ENCODE measurements at regions of chr7 and their contacts with region 1.

Region 1: DNA sequence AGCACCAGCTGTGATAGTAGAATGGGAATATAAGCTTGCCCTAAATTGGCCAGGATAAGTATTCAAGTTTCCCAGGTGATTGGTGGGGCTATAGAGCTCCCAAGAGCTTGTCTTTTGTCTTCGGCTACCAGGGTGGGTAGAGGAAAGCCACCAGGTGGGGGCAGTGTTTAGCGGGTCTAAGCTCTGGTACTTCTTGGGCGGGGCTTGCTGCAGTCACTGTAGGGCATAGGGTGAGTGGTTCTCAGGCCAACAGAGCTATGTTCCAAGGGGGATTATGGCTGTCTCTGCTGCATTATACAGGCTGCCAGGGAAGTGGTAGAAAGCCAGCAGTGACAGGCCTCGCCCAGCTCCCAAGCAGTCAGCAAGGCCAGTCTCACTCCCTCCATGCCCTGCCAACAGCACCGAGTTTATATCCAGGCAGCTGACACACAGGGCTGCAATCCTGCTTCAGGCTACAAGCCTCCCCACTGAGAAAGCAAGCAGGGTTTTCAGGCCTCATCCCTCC is 110.7 kb downstream of the ZNF467 start:
- DNase-seq: peak; percentile 50 to 63 (median 54)
- H3K4me3 ChIP-seq: no peak overlapping the region
- H3K4me3 Mint-ChIP-seq: no peak overlapping the region
- H3K27ac ChIP-seq: no peak overlapping the region
- H3K27ac Mint-ChIP-seq: peak overlapping the region in 1 of 7 donors; percentile 30
- H3K4me1 ChIP-seq: no peaks in the 10 kb centered on the region
- H3K4me1 Mint-ChIP-seq: no peaks in the 10 kb centered on the region
- H3K27me3 ChIP-seq: no peaks in the 10 kb centered on the region
- H3K27me3 Mint-ChIP-seq: peaks cover 5 to 36% (median 26%) of the 10 kb centered on the region in 3 donors
- CTCF ChIP-seq: peak; percentile 75

Region 2: GRCh38 chr7:149642589-149642988 is 20.1 kb before region 1 on chr7:
- intact Hi-C with region 1: no loop called
- DNase-seq: no peak
- H3K4me3 ChIP-seq: no peak overlapping the region
- H3K4me3 Mint-ChIP-seq: no peak overlapping the region
- H3K27ac ChIP-seq: no peak overlapping the region
- H3K27ac Mint-ChIP-seq: peak overlapping the region in 1 of 7 donors; percentile 35
- H3K4me1 ChIP-seq: no peaks in the 10 kb centered on the region
- H3K4me1 Mint-ChIP-seq: no peaks in the 10 kb centered on the region
- H3K27me3 ChIP-seq: no peaks in the 10 kb centered on the region
- H3K27me3 Mint-ChIP-seq: peaks cover 4 to 14% (median 6%) of the 10 kb centered on the region in 3 donors
- CTCF ChIP-seq: no peak

Region 3: DNA sequence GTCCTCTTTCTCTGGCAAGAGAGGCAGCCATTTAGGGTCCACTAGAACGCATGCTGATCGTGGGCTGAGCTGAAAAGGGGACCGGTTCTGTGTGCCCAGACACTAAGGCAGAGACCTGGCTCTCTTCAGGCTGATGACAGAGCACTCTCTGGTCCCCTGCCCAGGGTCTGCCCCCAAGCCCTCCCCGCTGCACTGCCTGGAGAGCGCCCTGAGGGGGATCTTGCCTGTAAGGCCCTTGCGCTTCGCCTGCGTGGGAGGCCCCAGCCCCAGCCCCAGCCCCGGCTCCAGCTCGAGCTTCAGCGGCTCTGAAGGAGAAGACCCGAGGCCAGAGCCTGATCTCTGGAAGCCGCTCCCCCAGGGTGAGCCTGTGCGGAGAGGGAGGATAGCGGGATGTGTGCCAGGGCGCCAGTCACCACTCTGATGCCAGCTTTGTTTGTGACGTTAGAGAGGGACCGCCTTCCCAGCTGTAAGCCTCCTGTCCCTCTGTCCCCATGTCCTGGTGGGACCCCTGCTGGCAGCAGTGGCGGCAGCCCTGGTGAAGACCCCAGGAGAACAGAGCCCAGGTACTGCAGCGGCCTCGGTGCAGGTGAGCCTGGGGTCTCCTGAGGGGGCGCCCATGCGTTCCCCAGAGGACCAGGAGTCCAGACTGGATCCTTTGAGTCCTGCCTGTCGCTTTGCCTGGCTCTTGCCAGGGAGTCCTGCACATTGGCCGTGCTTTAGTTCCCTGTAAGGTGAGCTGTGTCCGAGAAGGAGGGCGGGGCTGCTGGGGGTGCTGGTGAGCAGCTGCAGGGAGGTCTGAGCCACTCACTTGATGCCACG is 67.5 kb after region 1 on chr7:
- intact Hi-C with region 1: no loop called
- DNase-seq: no peak
- H3K4me3 ChIP-seq: no peak overlapping the region
- H3K4me3 Mint-ChIP-seq: no peak overlapping the region
- H3K27ac ChIP-seq: no peak overlapping the region
- H3K27ac Mint-ChIP-seq: no peak overlapping the region
- H3K4me1 ChIP-seq: peaks cover 8% of the 10 kb centered on the region in 2 donors
- H3K4me1 Mint-ChIP-seq: peaks cover 14% of the 10 kb centered on the region
- H3K27me3 ChIP-seq: no peaks in the 10 kb centered on the region
- H3K27me3 Mint-ChIP-seq: peaks cover 0 to 4% (median 0%) of the 10 kb centered on the region in 3 donors
- CTCF ChIP-seq: no peak

Region 4: DNA sequence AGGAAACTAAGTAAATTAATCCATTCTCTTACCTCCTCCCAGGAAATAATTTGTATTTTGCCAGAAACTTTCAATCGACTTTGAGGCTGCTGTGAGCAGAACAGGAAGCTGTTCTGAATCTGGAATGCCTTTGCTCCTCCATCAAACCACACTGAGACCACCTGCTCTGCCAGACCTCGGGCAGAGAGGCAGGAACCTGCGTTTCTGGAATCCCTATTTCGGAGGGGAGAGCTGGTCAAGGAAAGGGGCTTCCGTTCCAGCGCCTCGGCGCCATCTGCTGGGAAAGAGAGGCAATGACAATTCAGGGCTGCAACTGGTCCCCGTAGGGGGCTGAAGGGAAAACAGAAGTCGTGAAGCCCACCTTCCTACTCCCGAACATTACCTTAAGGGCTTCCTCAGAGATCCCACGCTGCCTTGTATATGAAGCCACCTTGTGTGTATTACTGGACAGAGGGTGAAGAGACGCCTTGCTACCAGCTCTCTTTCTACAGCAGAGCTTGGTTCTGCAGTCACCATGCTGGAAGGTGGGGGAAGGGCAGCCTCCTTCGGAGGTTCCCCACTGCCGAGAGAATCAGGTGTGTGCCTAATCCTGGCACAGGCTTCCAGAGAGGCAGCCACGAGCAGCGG is 79.5 kb after region 1 on chr7:
- intact Hi-C with region 1: loop called in 1 of 2 experiments (anchors 10 kb)
- DNase-seq: peak; percentile 28 to 51 (median 45)
- H3K4me3 ChIP-seq: peak overlapping the region; percentile 8 to 75 (median 33)
- H3K4me3 Mint-ChIP-seq: peak overlapping the region; percentile 79 to 91
- H3K27ac ChIP-seq: no peak overlapping the region
- H3K27ac Mint-ChIP-seq: peak overlapping the region in 3 of 7 donors; percentile 14 to 70 (median 66)
- H3K4me1 ChIP-seq: peaks cover 11 to 12% of the 10 kb centered on the region in 2 donors
- H3K4me1 Mint-ChIP-seq: peaks cover 12% of the 10 kb centered on the region
- H3K27me3 ChIP-seq: peaks cover 0 to 5% of the 10 kb centered on the region in 2 donors
- H3K27me3 Mint-ChIP-seq: peaks cover 18 to 46% (median 24%) of the 10 kb centered on the region in 3 donors
- CTCF ChIP-seq: peak; percentile 87

Region 5: DNA sequence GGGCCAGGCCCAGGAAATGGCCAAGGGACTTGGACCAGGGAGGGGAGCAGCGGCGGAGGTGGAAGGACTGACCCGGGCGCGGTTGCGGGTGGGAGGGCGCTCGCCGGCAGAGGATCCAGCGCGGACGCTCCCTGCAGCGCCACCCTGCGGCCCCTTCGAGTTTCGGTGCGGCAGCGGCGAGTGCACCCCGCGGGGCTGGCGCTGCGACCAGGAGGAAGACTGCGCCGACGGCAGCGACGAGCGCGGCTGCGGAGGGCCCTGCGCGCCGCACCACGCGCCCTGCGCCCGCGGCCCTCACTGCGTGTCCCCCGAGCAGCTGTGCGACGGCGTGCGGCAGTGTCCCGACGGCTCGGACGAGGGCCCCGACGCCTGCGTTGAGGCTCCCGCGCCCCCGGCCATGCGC is 127.5 kb after region 1 on chr7:
- intact Hi-C with region 1: loop called (anchors 2 to 5 kb)
- DNase-seq: peak; percentile 52 to 57 (median 56)
- H3K4me3 ChIP-seq: no peak overlapping the region
- H3K4me3 Mint-ChIP-seq: peak overlapping the region in 1 of 2 donors; percentile 60
- H3K27ac ChIP-seq: no peak overlapping the region
- H3K27ac Mint-ChIP-seq: no peak overlapping the region
- H3K4me1 ChIP-seq: peaks cover 12 to 19% of the 10 kb centered on the region in 2 donors
- H3K4me1 Mint-ChIP-seq: peaks cover 8% of the 10 kb centered on the region
- H3K27me3 ChIP-seq: peaks cover 3 to 39% of the 10 kb centered on the region in 2 donors
- H3K27me3 Mint-ChIP-seq: peaks cover 25 to 55% (median 51%) of the 10 kb centered on the region in 3 donors
- CTCF ChIP-seq: peak; percentile 88

Measured in CD14-positive monocyte (primary cell).